ENCODE measurements at regions of chr2 and their contacts with region 1.

Region 1: DNA sequence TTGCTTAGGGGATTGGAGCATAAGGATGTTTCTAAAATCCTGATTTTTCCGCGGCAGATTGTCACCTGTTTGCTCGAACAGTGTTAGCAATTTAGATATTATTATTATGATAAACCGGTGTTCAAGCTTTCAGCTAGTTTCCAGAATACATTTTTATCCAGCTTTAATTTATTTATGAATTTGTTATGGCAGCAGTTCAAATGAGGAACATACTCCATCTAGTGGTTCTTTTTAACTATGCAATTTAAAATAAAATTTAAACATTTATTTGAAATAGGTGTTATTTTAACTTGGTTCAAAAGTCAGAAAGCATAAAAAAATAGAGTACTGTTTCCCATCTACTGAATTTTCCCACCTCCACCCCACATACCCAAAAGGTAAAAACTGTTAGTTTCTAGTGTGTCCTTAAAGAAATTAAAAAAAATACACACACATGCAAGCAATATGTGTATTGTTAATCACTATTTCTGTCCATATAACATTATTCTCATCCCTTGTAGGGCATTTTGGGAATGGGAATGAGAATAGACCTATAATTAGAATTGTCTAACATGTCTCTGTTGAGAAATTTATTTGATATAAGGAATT is 23.2 kb downstream of the ACOXL start:
- DNase-seq: no peak
- ATAC-seq: no peak

Region 2: GRCh38 chr2:110677530-110678456 is 77.8 kb before region 1 on chr2 and contains the start of gene BUB1:
- intact Hi-C with region 1: loop called (anchors 5 kb)
- DNase-seq: peak; percentile 98
- ATAC-seq: peak; percentile 99
- total RNA-seq, gene BUB1: 0.87 TPM

Region 3: DNA sequence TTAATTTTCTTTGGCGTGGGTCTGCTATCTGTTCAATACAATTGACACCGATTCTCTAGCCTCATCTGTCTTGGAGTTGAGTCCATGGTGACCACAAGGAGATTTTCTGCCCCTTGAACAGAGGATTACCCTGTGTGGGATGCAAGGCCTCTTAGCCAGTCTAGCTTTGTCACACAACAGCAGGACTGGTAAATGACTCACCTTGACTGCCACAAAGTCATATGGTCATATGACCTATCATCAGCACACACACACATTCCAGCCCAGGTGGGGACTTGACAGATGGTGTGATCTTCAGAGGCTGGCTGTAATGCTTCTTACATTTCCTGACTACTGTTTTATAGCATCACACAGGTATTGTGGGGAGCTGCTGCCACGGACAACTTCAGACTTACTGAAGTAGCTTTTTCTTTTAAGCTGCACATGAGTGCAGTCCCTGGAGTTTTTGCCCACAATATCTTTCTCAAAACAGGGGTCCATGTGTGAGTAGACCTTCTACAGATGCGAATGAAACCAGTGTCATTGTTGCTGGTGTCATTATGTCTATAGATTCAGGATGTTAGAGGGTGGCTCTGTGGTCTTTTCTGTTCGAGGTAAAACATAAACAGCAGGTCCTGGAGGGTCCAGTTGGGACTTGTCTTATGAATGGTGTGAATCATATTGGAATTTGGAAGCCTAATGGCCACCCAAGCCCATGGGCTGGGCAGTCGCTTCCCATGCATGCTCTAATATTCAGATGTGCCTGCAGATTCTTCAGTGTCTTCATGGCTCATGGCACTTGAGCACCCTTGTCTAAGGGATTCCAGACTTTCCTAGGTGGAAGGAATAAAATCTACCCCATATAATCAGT is 41.8 kb before region 1 on chr2:
- intact Hi-C with region 1: no loop called
- DNase-seq: no peak
- ATAC-seq: no peak

Region 4: GRCh38 chr2:111106706-111107105 is 351.1 kb after region 1 on chr2:
- intact Hi-C with region 1: no loop called
- DNase-seq: no peak
- ATAC-seq: no peak

Measured in Right ventricle myocardium inferior (tissue), 1 donor.